ENCODE measurements at regions of chr10 and their contacts with region 1.

Region 1: GRCh38 chr10:30359373-30360206 is 10.5 kb upstream of the MTPAP start:
- DNase-seq: peak; percentile 74
- H3K4me3 ChIP-seq: peak overlapping the region in 1 of 2 experiments; percentile 46; a peak in 1 of 4 replicates
- H3K27ac ChIP-seq: no peak overlapping the region
- H3K4me1 ChIP-seq: no peaks in the 10 kb centered on the region; a peak in 1 of 4 replicates
- H3K27me3 ChIP-seq: no peaks in the 10 kb centered on the region
- CTCF ChIP-seq: peak; percentile 75
- EP300 ChIP-seq: no peak
- RAD21 ChIP-seq: peak; percentile 37

Region 2: DNA sequence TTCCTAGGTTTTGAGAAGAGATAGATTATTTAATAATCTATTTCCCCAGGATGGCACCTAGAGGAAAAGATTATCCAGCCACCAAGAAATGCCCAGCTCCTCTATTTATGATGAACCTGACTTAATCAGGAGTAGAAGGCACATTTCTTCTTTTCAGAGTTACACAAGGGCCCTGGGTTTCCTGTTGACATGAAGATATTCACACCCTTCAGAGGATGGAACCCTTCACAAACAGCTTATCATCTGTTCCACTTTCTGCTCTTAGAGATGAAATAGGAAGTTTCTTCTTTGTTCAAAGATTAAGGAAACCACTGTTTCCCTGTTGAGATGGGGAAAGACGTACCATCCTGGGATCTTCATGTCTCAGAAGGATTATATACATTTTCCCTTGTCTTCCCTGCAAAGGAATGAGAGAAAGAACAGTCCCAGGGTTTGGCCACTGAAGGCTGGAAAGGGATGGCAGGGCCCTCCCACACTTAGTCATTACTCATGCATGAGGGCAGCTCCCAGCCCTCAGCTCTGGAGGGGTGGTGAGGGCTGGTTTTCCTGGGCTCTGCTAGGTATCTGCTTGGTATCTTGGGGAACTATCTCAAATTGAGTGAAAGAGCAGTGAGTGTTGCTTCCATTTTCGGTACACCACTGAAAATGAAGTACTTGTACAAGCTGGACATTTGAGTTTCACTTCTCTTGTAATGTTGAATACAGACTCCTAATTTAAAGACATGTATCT is 74.6 kb before region 1 on chr10:
- CTCF ChIA-PET with region 1: no interaction called
- POLR2A ChIA-PET with region 1: no interaction called
- DNase-seq: peak; percentile 7
- H3K4me3 ChIP-seq: no peak overlapping the region
- H3K27ac ChIP-seq: no peak overlapping the region
- H3K4me1 ChIP-seq: no peaks in the 10 kb centered on the region
- H3K27me3 ChIP-seq: no peaks in the 10 kb centered on the region
- CTCF ChIP-seq: no peak
- EP300 ChIP-seq: no peak
- RAD21 ChIP-seq: no peak

Region 3: DNA sequence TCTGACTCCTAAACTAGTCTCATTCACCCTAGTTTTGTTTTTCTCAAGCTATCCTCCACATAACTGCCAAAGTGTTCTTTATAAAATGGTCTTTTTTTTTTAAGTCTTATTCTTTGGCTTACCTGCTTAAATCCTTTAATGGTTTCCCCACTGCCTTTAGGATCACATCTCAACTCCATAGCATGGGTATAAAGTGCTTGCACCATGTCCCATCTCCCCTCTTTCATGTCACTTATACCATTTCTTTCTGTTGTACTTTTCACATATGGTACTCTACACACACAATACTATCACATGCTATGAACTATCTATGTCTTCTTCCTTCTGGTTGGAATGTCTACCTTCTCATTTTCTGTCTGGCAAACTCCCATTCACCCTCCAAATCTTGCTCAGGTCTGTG is 15.6 kb before region 1 on chr10:
- CTCF ChIA-PET with region 1: interaction called, 15 read pairs
- POLR2A ChIA-PET with region 1: no interaction called
- DNase-seq: no peak
- H3K4me3 ChIP-seq: no peak overlapping the region
- H3K27ac ChIP-seq: no peak overlapping the region
- H3K4me1 ChIP-seq: peaks cover 6 to 9% of the 10 kb centered on the region in 2 experiments; a peak in 1 of 4 replicates
- H3K27me3 ChIP-seq: no peaks in the 10 kb centered on the region
- CTCF ChIP-seq: no peak
- EP300 ChIP-seq: no peak
- RAD21 ChIP-seq: no peak

Region 4: DNA sequence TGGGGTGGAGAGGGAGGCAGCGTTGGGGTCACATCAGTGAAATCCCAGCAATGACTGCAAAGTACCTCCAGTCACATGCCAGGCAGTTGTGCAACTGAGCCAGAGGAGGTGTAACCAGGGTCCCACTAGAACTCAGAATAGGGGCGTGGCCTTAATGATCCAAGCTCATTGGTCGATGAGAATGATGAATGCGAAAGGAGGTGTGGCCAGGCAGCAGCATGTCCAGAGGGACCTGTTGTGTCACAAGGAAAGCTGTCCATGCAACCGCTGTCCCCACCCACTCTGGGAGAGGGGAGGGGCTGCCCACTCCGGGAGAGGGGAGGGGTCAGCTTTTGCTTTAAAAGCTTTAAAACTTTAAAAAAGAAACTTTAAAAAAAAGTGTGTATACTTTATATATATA is 14.8 kb after region 1 on chr10:
- CTCF ChIA-PET with region 1: interaction called, 22 read pairs
- POLR2A ChIA-PET with region 1: no interaction called
- DNase-seq: no peak
- H3K4me3 ChIP-seq: no peak overlapping the region
- H3K27ac ChIP-seq: no peak overlapping the region
- H3K4me1 ChIP-seq: no peaks in the 10 kb centered on the region; a peak in 1 of 4 replicates
- H3K27me3 ChIP-seq: no peaks in the 10 kb centered on the region
- CTCF ChIP-seq: no peak
- EP300 ChIP-seq: no peak
- RAD21 ChIP-seq: no peak

Region 5: DNA sequence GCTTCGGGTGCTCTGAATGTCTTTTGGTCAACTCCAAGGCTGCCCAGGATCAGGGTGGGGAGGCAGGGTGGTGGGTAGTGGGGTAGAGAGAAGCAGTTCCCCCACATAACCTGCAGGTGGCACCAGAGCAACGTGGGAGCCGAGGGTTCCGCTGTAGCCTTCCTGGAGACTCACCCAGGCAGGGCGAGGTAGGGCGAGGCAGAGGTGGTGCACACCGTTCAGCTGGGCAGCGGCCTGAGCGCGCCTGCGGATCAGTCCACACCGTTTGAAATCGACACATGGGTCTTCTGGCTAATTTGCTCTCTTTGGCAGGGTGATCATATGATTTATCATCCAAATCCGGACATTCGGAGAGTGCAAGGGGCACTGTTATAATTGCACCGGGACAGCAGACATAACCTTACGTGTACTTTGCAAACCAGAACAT is 33.0 kb after region 1 on chr10:
- CTCF ChIA-PET with region 1: interaction called, 14 read pairs
- POLR2A ChIA-PET with region 1: no interaction called
- DNase-seq: peak; percentile 89
- H3K4me3 ChIP-seq: peak overlapping the region; percentile 12 to 16; a peak in 2 of 4 replicates
- H3K27ac ChIP-seq: no peak overlapping the region
- H3K4me1 ChIP-seq: peaks cover 0 to 9% of the 10 kb centered on the region in 2 experiments; a peak in 1 of 4 replicates
- H3K27me3 ChIP-seq: peaks cover 7% of the 10 kb centered on the region; the same call in 1 of the 2 replicates
- CTCF ChIP-seq: peak; percentile 86
- EP300 ChIP-seq: no peak
- RAD21 ChIP-seq: peak; percentile 91

Measured in SK-N-SH (cell line).